Common myeloid progenitor, CD34-positive (primary cell): ENCODE measurements at regions of chr12 and their contacts with region 1.

Region 1: GRCh38 chr12:9331218-9331626 is 123.0 kb upstream of the PZP start:
- DNase-seq: peak; percentile 46 to 73 (median 57)
- H3K4me3 ChIP-seq: no peak overlapping the region
- H3K27ac ChIP-seq: no peak overlapping the region
- H3K4me1 ChIP-seq: peaks cover 6 to 27% (median 20%) of the 10 kb centered on the region in 4 experiments
- H3K27me3 ChIP-seq: no peaks in the 10 kb centered on the region

Region 2: DNA sequence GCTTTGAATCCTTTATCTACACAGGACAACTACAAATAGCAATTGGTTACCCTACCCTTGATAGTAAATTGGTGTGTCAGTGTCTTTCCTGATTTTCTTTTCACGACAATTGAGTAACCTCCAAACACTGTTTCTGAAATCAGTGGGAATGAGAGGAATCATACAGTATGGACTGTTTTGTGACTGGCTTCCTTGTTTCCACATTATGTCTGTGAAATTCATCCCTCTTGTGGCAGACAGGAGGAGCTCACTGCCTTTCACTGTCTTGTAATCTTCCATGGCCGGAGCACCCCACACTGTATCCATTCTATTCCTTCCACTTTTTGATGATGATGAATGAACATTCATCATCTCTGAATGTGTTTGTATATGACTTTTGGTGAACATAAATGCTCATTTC is 41.0 kb after region 1 on chr12:
- CTCF ChIA-PET with region 1: interaction called, 41 read pairs
- POLR2A ChIA-PET with region 1: no interaction called
- DNase-seq: peak; percentile 37 to 67 (median 56)
- H3K4me3 ChIP-seq: no peak overlapping the region
- H3K27ac ChIP-seq: no peak overlapping the region
- H3K4me1 ChIP-seq: peaks cover 0 to 3% (median 0%) of the 10 kb centered on the region in 4 experiments
- H3K27me3 ChIP-seq: no peaks in the 10 kb centered on the region

Region 3: DNA sequence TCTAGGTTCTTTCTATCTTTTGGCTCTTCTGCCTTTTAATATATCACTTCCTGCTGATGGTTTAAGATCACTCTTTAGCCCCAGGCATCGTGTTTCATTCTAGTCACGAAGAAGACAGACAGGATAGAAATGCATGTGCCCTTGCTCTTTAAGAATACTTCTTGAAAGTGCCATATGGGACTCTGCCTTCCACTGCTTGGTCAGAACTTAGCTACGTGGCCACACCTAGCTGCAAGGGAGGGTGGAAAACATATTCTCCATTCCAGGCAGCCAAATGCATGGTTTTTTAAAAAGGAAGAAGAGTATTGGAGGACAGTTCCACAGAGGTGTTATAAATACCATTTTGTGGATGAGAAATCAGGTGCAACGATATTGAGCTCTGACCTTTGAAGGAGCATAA is 133.2 kb after region 1 on chr12:
- CTCF ChIA-PET with region 1: interaction called, 14 read pairs
- POLR2A ChIA-PET with region 1: no interaction called
- DNase-seq: no peak
- H3K4me3 ChIP-seq: no peak overlapping the region
- H3K27ac ChIP-seq: no peak overlapping the region
- H3K4me1 ChIP-seq: peaks cover 0 to 7% (median 6%) of the 10 kb centered on the region in 4 experiments
- H3K27me3 ChIP-seq: no peaks in the 10 kb centered on the region